Gastrocnemius medialis (tissue), 4 donors: ENCODE measurements at regions of chr2 and their contacts with region 1.

Region 1: DNA sequence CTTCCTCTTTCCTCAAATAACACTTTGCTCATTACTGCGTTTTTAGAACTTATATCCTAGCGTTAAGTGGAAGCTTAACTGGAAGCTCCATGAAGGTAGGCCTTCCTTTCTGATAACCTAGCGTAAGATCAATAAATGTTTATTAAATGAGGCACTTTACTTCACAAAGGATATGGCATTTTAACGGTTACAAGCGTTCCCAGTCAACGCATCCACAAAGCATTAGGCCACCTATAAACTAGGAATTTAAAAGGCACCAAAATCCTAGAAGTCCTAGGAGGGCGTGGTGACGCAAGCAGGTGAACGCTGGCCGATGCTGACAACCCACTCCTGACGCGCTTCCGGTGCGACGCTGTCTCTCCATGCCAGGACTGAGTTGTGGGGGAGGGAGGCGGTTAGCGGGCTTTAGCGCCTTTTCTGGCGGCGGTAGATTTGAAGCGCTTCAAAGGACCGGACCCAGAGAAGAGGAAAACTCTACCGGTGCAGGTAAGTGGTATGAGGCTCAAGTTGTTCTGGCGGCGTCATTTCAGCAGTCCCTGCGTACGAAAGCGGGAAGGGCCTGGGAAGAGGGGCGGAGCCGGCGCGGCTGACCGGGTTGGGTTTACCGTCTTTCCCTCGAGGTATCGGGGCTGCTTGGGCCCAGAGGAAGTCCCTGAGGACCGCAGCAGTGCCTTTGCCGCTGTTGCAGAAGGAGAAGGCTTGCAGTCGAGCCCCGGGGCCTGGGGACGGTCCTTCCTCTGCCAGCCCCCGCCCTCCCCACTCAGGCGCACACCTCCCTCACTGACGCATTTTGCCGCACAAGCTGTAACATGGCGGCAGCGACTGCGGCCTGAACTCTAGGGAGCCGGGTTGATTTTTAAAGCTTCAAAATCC is at the start of gene PPIG:
- DNase-seq: peak; percentile 82 to 85
- ATAC-seq: peak; percentile 96 to 97
- H3K4me3 ChIP-seq: peak within 1 kb of the TSS; percentile 87 to 99 (median 96)
- H3K27ac ChIP-seq: peak within 1 kb of the TSS; percentile 96 to 98 (median 97)
- H3K4me1 ChIP-seq: peaks cover 18 to 26% of the 10 kb centered on the region in 2 donors
- H3K27me3 ChIP-seq: no peaks in the 10 kb centered on the region
- CTCF ChIP-seq: no peak
- POLR2A ChIP-seq: peak; percentile 62 to 68
- total RNA-seq, gene PPIG: 27.7 to 40.5 (median 29.3) TPM

Region 2: DNA sequence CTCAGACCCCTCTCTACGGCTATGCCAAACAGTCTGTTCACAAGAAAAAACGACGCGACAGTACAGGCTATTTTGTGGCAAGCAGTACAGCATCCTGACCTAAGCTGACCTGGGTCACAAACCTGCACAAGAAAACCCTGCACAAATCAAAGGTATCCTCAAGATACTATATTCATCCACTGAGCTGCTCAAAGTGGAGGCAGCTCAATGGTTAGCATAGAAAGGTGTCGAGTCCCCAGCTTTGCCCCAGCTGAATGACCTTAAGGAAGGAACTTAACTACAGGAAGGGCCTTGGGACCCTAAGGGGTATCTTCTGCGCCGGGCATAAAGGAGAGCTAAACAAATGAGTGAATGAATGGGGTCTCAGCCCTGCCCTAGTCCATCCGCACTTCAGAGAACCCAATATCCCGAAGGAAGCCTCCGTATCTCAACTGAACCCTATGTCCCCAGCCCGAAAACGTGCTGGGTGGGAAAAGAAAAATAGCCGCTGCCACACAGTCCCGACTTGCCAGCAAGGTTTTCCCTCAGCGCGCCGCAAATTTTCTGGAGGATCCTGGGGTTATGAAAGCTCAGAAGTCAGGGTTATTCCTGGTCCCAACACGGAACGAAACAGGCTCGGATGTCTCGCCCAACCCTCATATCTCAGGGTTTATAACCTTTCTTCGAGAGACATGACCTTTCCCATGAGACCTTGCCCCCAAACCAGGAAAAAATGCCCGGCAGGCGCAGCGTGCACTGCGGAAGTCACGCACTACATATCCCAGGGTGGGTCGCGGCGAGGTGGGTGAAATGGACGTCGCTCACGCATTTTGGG is 10.9 kb before region 1 on chr2 and contains the start of gene FASTKD1:
- in situ Hi-C with region 1: no loop called
- intact Hi-C with region 1: loop called (anchors 1 kb)
- DNase-seq: peak; percentile 81 to 86
- ATAC-seq: peak; percentile 98
- H3K4me3 ChIP-seq: peak within 1 kb of the TSS; percentile 63 to 88 (median 79)
- H3K27ac ChIP-seq: peak within 1 kb of the TSS; percentile 79 to 82 (median 80)
- H3K4me1 ChIP-seq: peaks cover 18 to 20% of the 10 kb centered on the region in 2 donors
- H3K27me3 ChIP-seq: no peaks in the 10 kb centered on the region
- CTCF ChIP-seq: no peak
- POLR2A ChIP-seq: peak in 1 of 2 donors; percentile 20
- total RNA-seq, gene FASTKD1: 9.7 to 27.4 (median 12.9) TPM

Region 3: DNA sequence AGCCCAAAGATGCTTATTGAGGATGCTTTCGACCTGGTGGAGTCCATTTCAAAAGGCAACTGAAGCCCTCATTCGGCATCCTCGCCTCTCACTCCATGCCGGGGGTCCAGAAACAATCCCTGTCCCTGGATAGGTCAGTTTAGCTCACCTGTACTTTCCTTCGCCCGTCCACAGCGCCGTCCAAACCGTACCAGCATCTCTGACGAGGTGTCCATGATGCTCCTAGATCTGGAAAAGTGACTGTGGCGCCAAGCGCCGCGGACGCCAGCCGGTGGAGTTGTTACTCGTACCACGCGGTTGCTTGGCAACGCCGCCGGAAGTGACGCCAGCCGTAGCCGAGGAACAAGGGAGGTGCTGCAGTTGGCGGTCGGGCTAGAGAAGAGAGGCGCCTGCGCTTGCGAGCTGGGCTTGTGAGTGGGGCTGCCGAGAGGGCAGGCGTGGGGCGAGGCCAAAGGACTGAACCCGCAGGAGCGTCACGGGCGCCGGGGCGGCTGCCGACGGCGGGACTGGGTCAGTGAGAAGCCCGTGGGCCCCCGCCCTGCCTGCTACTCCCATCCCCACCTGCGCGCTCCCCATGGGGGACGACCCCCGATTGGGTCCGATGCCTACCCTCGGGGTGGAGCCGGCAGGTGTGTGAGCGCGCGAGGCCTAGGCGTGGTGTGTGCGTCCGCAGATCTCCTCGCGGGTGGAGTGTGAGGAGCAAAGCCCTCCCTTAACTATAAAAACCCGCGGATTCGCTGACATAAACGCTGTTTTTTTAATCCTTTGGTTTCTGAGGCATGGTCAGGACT is 110.1 kb after region 1 on chr2 and contains the starts of genes CFAP210 and PHOSPHO2:
- in situ Hi-C with region 1: no loop called
- intact Hi-C with region 1: loop called (anchors 5 kb)
- DNase-seq: peak; percentile 96 to 99
- ATAC-seq: peak; percentile 98 to 99
- H3K4me3 ChIP-seq: peak within 1 kb of the TSS; percentile 87 to 93 (median 88)
- H3K27ac ChIP-seq: peak within 1 kb of the TSS; percentile 83 to 90 (median 87)
- H3K4me1 ChIP-seq: peaks cover 13 to 14% of the 10 kb centered on the region in 2 donors
- H3K27me3 ChIP-seq: no peaks in the 10 kb centered on the region
- CTCF ChIP-seq: no peak
- POLR2A ChIP-seq: peak; percentile 74 to 77
- total RNA-seq, gene CFAP210: not detected
- total RNA-seq, gene PHOSPHO2: 2.0 to 9.4 (median 2.9) TPM